ENCODE measurements at regions of chr1 and their contacts with region 1.

Region 1: DNA sequence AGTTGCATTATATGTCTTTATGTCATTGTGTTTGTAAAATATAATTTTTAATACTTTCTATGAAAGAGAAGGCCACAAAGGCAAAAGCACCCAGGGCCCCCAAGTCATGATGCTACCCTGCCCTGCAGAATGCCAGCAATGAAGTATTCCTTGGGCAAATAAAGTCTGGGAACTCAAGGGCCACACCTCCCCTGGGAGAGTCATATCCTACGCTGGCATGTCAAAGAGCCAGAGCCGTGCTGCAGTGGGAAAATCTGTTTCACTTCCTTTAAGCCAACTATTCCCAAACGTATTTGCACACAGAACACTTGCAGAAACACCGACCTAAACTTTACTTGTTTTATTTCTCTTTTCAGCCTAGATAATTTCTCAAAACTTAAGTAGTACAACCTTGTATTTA is 98.4 kb upstream of the KAZN start:
- DNase-seq: no peak
- H3K4me3 ChIP-seq: no peak overlapping the region
- CTCF ChIP-seq: no peak

Region 2: GRCh38 chr1:14465996-14466395 is 34.0 kb before region 1 on chr1:
- in situ Hi-C with region 1: no loop called
- DNase-seq: no peak
- H3K4me3 ChIP-seq: no peak overlapping the region
- CTCF ChIP-seq: no peak

Region 3: DNA sequence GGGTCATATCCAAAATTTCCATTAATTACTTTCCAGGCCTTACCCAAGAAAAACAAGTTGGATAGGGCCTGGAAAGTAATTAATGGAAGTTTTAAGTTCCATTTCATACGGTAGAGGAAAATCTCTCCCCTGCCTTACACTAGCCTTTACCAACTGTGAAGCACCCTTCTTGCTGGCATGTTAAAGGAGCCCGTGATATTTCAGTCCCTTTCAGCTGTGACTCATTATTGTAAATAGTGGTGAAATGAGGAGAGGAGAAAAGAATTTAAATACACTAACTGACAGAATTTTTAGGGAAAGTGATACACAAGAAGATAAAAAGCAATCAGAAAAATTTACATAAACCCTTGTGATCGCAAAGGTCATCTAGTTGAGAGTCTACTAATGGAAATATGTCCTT is 78.1 kb after region 1 on chr1:
- in situ Hi-C with region 1: loop called (anchors 5 kb)
- DNase-seq: no peak
- H3K4me3 ChIP-seq: no peak overlapping the region
- CTCF ChIP-seq: no peak